ENCODE measurements at regions of chr12 and their contacts with region 1.

Region 1: DNA sequence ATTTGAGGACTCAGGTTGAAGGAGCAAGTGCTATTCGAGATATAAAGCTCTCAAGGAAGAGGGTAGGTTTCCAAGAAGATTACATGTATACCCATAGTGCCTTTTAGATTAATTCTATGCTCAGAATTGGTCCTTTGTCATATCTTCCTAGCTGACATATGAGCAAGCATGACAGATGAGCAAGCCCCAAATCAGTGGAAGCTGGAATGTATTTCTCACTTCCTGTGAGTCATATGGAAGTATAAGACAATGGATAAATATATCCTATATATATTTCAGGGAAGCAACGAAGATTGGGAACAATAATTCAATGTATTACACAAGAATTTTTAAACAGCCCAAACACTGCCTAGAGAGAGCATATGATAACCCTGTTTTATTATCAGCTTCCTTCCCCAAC is 674.1 kb upstream of the ATXN7L3B start:
- DNase-seq: no peak
- H3K4me3 ChIP-seq: no peak overlapping the region
- H3K27ac ChIP-seq: no peak overlapping the region
- H3K4me1 ChIP-seq: no peaks in the 10 kb centered on the region
- H3K27me3 ChIP-seq: no peaks in the 10 kb centered on the region
- CTCF ChIP-seq: no peak
- EP300 ChIP-seq: no peak
- POLR2A ChIP-seq: no peak

Region 2: GRCh38 chr12:74476234-74476633 is 612.7 kb after region 1 on chr12:
- intact Hi-C with region 1: loop called in 1 of 4 experiments (anchors 5 kb)
- DNase-seq: no peak
- H3K4me3 ChIP-seq: no peak overlapping the region
- H3K27ac ChIP-seq: no peak overlapping the region
- H3K4me1 ChIP-seq: no peaks in the 10 kb centered on the region
- H3K27me3 ChIP-seq: no peaks in the 10 kb centered on the region
- CTCF ChIP-seq: no peak
- EP300 ChIP-seq: no peak
- POLR2A ChIP-seq: no peak

Measured in ovary (tissue), 10 donors.